Activated CD4-positive, alpha-beta memory T cell treated with anti-CD3 and anti-CD28 coated beads for 36 hours (primary cell): ENCODE measurements at regions of chr15 and their contacts with region 1.

Region 1: DNA sequence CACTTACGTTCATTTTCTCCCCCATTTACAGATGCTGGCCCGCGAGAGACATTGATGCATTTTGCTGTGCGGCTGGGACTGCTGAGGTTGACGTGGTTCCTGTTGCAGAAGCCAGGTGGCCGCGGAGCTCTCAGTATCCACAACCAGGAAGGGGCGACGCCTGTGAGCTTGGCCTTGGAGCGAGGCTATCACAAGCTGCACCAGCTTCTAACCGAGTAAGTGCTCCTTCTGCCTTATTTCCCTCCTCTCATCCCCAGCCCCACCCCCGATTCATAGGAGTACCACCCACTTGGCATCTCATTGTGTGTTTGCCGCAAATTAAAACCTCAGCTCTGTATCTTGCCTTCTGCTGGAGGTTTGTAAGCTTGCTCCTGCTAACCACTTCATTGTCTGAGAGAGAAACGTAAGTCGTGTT is 163.3 kb downstream of the AKAP13 start:
- DNase-seq: peak; percentile 20
- H3K4me3 Mint-ChIP-seq: no peak overlapping the region
- H3K27ac Mint-ChIP-seq: no peak overlapping the region
- H3K4me1 Mint-ChIP-seq: peaks cover 80% of the 10 kb centered on the region
- H3K27me3 Mint-ChIP-seq: no peaks in the 10 kb centered on the region

Region 2: GRCh38 chr15:84894442-84895361 is 649.0 kb before region 1 on chr15:
- CTCF ChIA-PET with region 1: no interaction called
- POLR2A ChIA-PET with region 1: no interaction called
- intact Hi-C with region 1: no loop called
- DNase-seq: no peak
- H3K4me3 Mint-ChIP-seq: no peak overlapping the region
- H3K27ac Mint-ChIP-seq: no peak overlapping the region
- H3K4me1 Mint-ChIP-seq: no peaks in the 10 kb centered on the region
- H3K27me3 Mint-ChIP-seq: peaks cover 3% of the 10 kb centered on the region

Region 3: DNA sequence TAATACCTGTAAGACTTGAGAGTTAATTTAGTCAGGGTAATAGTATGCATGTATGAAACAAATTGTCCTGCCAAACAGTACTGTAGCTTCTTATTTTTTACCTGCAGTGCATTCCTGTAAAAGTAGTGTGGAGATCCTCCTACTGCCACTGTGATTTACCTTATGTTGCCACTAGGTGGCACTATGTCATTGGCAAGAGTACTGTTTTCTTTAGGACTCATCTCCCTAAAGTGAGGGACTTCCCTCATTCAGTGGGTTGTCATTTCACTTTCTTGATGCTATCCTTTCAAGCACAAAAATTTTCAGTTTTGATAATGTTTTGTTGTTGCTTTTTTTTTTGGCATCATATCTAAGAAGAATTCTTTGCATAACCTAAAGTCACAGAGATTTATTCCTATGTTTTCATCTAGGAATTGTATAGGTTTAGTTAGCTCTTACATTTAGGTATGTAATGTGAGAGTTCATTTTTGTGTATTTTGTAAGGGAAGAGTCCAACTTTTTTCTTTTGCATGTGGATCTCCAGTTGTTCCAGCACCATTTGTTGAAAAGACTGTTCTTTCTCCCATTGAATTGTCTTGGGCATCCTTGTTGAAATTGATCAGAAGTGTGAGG is 57.7 kb before region 1 on chr15:
- CTCF ChIA-PET with region 1: no interaction called
- POLR2A ChIA-PET with region 1: no interaction called
- intact Hi-C with region 1: loop called (anchors 2 kb)
- DNase-seq: peak; percentile 41
- H3K4me3 Mint-ChIP-seq: no peak overlapping the region
- H3K27ac Mint-ChIP-seq: peak overlapping the region; percentile 32
- H3K4me1 Mint-ChIP-seq: peaks cover 69% of the 10 kb centered on the region
- H3K27me3 Mint-ChIP-seq: no peaks in the 10 kb centered on the region

Region 4: GRCh38 chr15:85554852-85555521 is 11.2 kb after region 1 on chr15:
- CTCF ChIA-PET with region 1: interaction called, 6 read pairs
- POLR2A ChIA-PET with region 1: interaction called, 4 read pairs
- intact Hi-C with region 1: loop called (anchors 1 kb)
- DNase-seq: no peak
- H3K4me3 Mint-ChIP-seq: no peak overlapping the region
- H3K27ac Mint-ChIP-seq: no peak overlapping the region
- H3K4me1 Mint-ChIP-seq: peaks cover 65% of the 10 kb centered on the region
- H3K27me3 Mint-ChIP-seq: no peaks in the 10 kb centered on the region

Region 5: DNA sequence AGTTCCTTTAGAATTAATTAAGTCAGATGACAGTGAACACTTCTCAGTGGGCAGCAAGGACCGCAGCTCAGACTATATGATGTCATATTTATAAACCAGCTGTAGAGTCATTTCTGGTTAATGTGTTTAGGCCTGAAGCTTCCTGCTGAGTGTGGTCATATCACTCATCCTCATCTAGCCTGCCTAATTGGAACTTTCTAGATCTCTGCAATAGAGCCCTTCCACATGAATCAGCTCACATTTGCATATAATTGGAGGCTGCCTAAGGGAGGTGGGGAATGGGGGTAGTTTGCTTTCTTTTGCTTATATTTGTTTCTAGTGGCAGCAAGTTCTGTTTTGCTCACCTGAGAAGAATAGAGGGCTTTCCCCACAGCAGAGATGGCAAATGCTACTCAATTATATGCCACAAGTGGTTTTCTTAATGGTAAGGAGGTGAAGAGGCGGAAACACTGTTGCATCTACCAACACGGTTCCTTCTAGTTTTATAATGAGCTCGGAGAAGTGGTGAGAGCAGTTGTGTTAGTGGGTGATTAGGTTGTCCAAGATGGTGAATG is 102.9 kb after region 1 on chr15:
- CTCF ChIA-PET with region 1: no interaction called
- POLR2A ChIA-PET with region 1: interaction called, 7 read pairs
- intact Hi-C with region 1: loop called (anchors 5 kb)
- DNase-seq: peak; percentile 58
- H3K4me3 Mint-ChIP-seq: no peak overlapping the region
- H3K27ac Mint-ChIP-seq: peak overlapping the region; percentile 90
- H3K4me1 Mint-ChIP-seq: peaks cover 65% of the 10 kb centered on the region
- H3K27me3 Mint-ChIP-seq: no peaks in the 10 kb centered on the region

Region 6: GRCh38 chr15:85897926-85898278 is 354.2 kb after region 1 on chr15:
- CTCF ChIA-PET with region 1: no interaction called
- POLR2A ChIA-PET with region 1: no interaction called
- intact Hi-C with region 1: no loop called
- DNase-seq: no peak
- H3K4me3 Mint-ChIP-seq: no peak overlapping the region
- H3K27ac Mint-ChIP-seq: no peak overlapping the region
- H3K4me1 Mint-ChIP-seq: peaks cover 5% of the 10 kb centered on the region
- H3K27me3 Mint-ChIP-seq: peaks cover 20% of the 10 kb centered on the region